Heart right ventricle (tissue), 16 donors: ENCODE measurements at regions of chr1 and their contacts with region 1.

Region 1: GRCh38 chr1:178725603-178726517 is 816 bp downstream of the RALGPS2 start:
- DNase-seq: peak; percentile 45 to 65
- ATAC-seq: peak; percentile 68 to 87 (median 83)
- H3K4me3 ChIP-seq: peak overlapping the region; percentile 56 to 95 (median 86)
- H3K27ac ChIP-seq: peak overlapping the region; percentile 14 to 90 (median 76)
- H3K4me1 ChIP-seq: peaks cover 0 to 23% (median 9%) of the 10 kb centered on the region in 9 donors
- H3K27me3 ChIP-seq: peaks cover 0 to 6% (median 0%) of the 10 kb centered on the region in 7 donors
- CTCF ChIP-seq: peak in 3 of 9 donors; percentile 10 to 44 (median 30)

Region 2: DNA sequence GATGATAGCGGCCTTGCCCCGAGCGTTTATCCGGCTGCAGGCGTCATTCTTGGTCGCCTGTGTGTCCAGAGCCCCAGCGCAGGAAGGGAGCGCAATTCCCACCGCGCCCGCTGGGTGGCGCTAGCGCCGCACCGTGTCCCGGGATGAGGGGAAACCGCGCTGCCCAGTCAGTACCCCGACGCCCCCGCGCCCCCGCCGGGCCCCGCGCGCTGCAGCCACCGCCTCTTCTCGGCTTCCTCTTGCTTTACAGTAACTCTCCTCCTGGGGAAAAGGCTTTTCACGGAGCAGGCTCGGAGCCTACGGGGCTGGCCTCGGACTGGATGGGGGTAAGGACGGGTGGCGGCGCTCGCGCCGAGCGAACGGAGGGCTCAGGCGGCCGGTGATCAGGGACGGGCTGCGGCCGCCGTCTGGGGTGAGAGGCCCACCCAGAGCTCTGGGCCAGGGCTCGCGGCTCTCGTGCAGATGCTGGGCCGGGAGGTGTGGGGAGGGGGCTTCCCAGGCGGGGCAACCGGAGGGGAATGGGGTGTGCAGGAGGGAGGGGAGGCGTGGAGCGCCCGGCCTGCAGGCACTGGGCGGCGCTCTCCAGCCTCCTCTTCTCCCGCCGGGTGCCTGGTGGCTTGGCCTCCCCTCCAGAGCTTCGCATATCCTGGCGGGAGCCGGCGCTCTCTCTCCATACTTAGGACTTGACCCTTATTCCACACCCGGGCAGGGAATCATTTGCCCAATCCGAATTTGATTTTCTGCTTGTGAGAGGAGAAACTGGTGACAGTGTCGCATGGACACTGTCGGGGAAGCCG is 183.1 kb before region 1 on chr1:
- intact Hi-C with region 1: loop called in 1 of 10 experiments (anchors 2 kb)
- DNase-seq: peak; percentile 90 to 94
- ATAC-seq: peak; percentile 88 to 97 (median 92)
- H3K4me3 ChIP-seq: peak overlapping the region; percentile 50 to 87 (median 66)
- H3K27ac ChIP-seq: peak overlapping the region; percentile 4 to 88 (median 80)
- H3K4me1 ChIP-seq: peaks cover 0 to 33% (median 18%) of the 10 kb centered on the region in 9 donors
- H3K27me3 ChIP-seq: no peaks in the 10 kb centered on the region
- CTCF ChIP-seq: peak; percentile 91 to 100 (median 99)

Region 3: GRCh38 chr1:178659789-178660208 is 66.1 kb before region 1 on chr1:
- intact Hi-C with region 1: loop called in 1 of 10 experiments (anchors 10 kb)
- DNase-seq: no peak
- ATAC-seq: no peak
- H3K4me3 ChIP-seq: no peak overlapping the region
- H3K27ac ChIP-seq: peak overlapping the region in 1 of 10 donors; percentile 13
- H3K4me1 ChIP-seq: peaks cover 0 to 15% (median 0%) of the 10 kb centered on the region in 9 donors
- H3K27me3 ChIP-seq: peaks cover 0 to 6% (median 0%) of the 10 kb centered on the region in 7 donors
- CTCF ChIP-seq: no peak

Region 4: DNA sequence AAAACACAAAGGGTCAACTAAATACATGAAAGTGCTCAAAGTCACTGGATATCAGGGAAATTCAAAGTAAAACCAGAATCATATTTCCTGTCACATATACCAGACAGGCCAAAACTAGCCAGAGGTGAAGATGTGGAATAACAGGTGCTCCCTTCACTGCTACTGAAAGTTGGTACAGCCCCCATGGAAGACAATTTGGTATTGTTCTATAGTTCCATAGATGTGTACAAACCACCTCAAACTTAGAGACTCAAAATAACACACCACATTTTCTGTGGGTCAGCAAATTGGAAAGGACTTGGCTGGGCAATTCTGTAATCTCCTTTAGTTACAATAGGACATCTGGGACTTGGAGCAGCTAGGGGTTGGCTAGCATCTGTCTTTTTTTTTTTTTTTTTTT is 543.2 kb after region 1 on chr1:
- intact Hi-C with region 1: no loop called
- DNase-seq: no peak
- ATAC-seq: no peak
- H3K4me3 ChIP-seq: no peak overlapping the region
- H3K27ac ChIP-seq: no peak overlapping the region
- H3K4me1 ChIP-seq: no peaks in the 10 kb centered on the region
- H3K27me3 ChIP-seq: no peaks in the 10 kb centered on the region
- CTCF ChIP-seq: no peak